ENCODE measurements at regions of chr12 and their contacts with region 1.

Region 1: GRCh38 chr12:101909646-101910045 is 32.3 kb downstream of the DRAM1 start:
- DNase-seq: no peak
- ATAC-seq: no peak
- H3K4me3 Mint-ChIP-seq: no peak overlapping the region
- H3K27ac Mint-ChIP-seq: no peak overlapping the region
- H3K4me1 Mint-ChIP-seq: no peaks in the 10 kb centered on the region
- H3K27me3 Mint-ChIP-seq: no peaks in the 10 kb centered on the region
- CTCF ChIP-seq: no peak

Region 2: GRCh38 chr12:101939856-101940265 is 30.2 kb after region 1 on chr12:
- CTCF ChIA-PET with region 1: interaction called, 11 read pairs
- POLR2A ChIA-PET with region 1: no interaction called
- intact Hi-C with region 1: no loop called
- DNase-seq: peak; percentile 75
- ATAC-seq: peak; percentile 69
- H3K4me3 Mint-ChIP-seq: no peak overlapping the region
- H3K27ac Mint-ChIP-seq: no peak overlapping the region
- H3K4me1 Mint-ChIP-seq: no peaks in the 10 kb centered on the region
- H3K27me3 Mint-ChIP-seq: peaks cover 14% of the 10 kb centered on the region
- CTCF ChIP-seq: peak; percentile 83

Region 3: GRCh38 chr12:102364709-102365108 is 455.1 kb after region 1 on chr12:
- CTCF ChIA-PET with region 1: no interaction called
- POLR2A ChIA-PET with region 1: no interaction called
- intact Hi-C with region 1: no loop called
- DNase-seq: no peak
- ATAC-seq: no peak
- H3K4me3 Mint-ChIP-seq: no peak overlapping the region
- H3K27ac Mint-ChIP-seq: no peak overlapping the region
- H3K4me1 Mint-ChIP-seq: no peaks in the 10 kb centered on the region
- H3K27me3 Mint-ChIP-seq: peaks cover 12% of the 10 kb centered on the region
- CTCF ChIP-seq: no peak

Measured in activated CD8-positive, alpha-beta T cell treated with anti-CD3 and anti-CD28 coated beads for 36 hours (primary cell).